Natural killer cell (primary cell): ENCODE measurements at regions of chr2 and their contacts with region 1.

Region 1: GRCh38 chr2:180675170-180675569 is 305.2 kb upstream of the UBE2E3 start:
- DNase-seq: no peak
- ATAC-seq: no peak
- H3K4me3 ChIP-seq: no peak overlapping the region
- H3K4me3 Mint-ChIP-seq: no peak overlapping the region
- H3K27ac ChIP-seq: no peak overlapping the region
- H3K27ac Mint-ChIP-seq: no peak overlapping the region
- H3K4me1 ChIP-seq: no peaks in the 10 kb centered on the region
- H3K4me1 Mint-ChIP-seq: no peaks in the 10 kb centered on the region
- H3K27me3 ChIP-seq: no peaks in the 10 kb centered on the region
- H3K27me3 Mint-ChIP-seq: peaks cover 4 to 7% of the 10 kb centered on the region in 2 donors
- CTCF ChIP-seq: no peak

Region 2: GRCh38 chr2:180319586-180320405 is 355.4 kb before region 1 on chr2:
- intact Hi-C with region 1: no loop called
- DNase-seq: no peak
- ATAC-seq: no peak
- H3K4me3 ChIP-seq: no peak overlapping the region
- H3K4me3 Mint-ChIP-seq: no peak overlapping the region
- H3K27ac ChIP-seq: no peak overlapping the region
- H3K27ac Mint-ChIP-seq: no peak overlapping the region
- H3K4me1 ChIP-seq: no peaks in the 10 kb centered on the region
- H3K4me1 Mint-ChIP-seq: no peaks in the 10 kb centered on the region
- H3K27me3 ChIP-seq: no peaks in the 10 kb centered on the region
- H3K27me3 Mint-ChIP-seq: no peaks in the 10 kb centered on the region
- CTCF ChIP-seq: no peak

Region 3: DNA sequence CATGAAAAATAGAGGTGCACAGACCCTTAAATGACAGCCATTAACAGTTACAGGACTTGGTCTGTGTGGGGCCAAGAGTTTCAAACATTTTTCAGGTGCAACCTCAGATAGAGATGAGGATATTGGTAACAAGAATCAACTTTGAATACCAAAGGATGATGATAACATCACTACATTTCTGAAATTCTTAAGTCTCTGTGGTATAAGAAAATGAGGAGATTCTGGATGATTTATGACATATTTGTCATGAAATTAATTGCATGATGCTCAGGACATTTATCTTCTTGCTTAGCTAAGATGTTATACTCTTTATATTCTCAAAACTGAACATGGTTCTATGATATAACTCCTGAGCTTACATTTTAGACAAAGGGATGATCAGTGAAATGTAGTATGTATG is 196.3 kb before region 1 on chr2:
- intact Hi-C with region 1: no loop called
- DNase-seq: no peak
- ATAC-seq: no peak
- H3K4me3 ChIP-seq: no peak overlapping the region
- H3K4me3 Mint-ChIP-seq: no peak overlapping the region
- H3K27ac ChIP-seq: no peak overlapping the region
- H3K27ac Mint-ChIP-seq: no peak overlapping the region
- H3K4me1 ChIP-seq: no peaks in the 10 kb centered on the region
- H3K4me1 Mint-ChIP-seq: no peaks in the 10 kb centered on the region
- H3K27me3 ChIP-seq: no peaks in the 10 kb centered on the region
- H3K27me3 Mint-ChIP-seq: no peaks in the 10 kb centered on the region
- CTCF ChIP-seq: no peak

Region 4: DNA sequence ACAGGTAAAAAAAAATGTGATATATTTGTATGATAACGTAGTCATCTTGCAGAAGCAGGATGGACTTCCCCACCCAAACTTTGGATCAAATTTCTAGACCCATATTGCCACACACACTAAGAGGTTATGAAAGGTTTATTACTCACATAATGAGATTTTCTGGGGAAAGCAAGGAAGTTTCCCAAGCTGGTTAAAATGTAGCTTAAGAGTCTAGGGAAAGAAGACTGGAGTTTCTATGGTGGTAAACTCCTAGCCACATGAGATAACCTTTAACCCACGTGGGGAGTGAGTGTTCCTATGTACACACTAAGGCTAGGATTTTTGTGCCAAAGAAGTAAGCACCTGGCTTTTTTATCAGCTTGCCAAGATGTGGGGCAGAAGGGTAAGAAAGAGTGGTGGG is 30.5 kb before region 1 on chr2:
- intact Hi-C with region 1: loop called (anchors 1 kb)
- DNase-seq: no peak
- ATAC-seq: no peak
- H3K4me3 ChIP-seq: no peak overlapping the region
- H3K4me3 Mint-ChIP-seq: no peak overlapping the region
- H3K27ac ChIP-seq: no peak overlapping the region
- H3K27ac Mint-ChIP-seq: no peak overlapping the region
- H3K4me1 ChIP-seq: no peaks in the 10 kb centered on the region
- H3K4me1 Mint-ChIP-seq: no peaks in the 10 kb centered on the region
- H3K27me3 ChIP-seq: no peaks in the 10 kb centered on the region
- H3K27me3 Mint-ChIP-seq: no peaks in the 10 kb centered on the region
- CTCF ChIP-seq: no peak

Region 5: GRCh38 chr2:180790891-180791290 is 115.7 kb after region 1 on chr2:
- intact Hi-C with region 1: no loop called
- DNase-seq: no peak
- ATAC-seq: no peak
- H3K4me3 ChIP-seq: no peak overlapping the region
- H3K4me3 Mint-ChIP-seq: no peak overlapping the region
- H3K27ac ChIP-seq: no peak overlapping the region
- H3K27ac Mint-ChIP-seq: no peak overlapping the region
- H3K4me1 ChIP-seq: no peaks in the 10 kb centered on the region
- H3K4me1 Mint-ChIP-seq: no peaks in the 10 kb centered on the region
- H3K27me3 ChIP-seq: peaks cover 2% of the 10 kb centered on the region
- H3K27me3 Mint-ChIP-seq: no peaks in the 10 kb centered on the region
- CTCF ChIP-seq: no peak

Region 6: GRCh38 chr2:180846756-180847472 is 171.7 kb after region 1 on chr2:
- intact Hi-C with region 1: no loop called
- DNase-seq: no peak
- ATAC-seq: no peak
- H3K4me3 ChIP-seq: no peak overlapping the region
- H3K4me3 Mint-ChIP-seq: no peak overlapping the region
- H3K27ac ChIP-seq: no peak overlapping the region
- H3K27ac Mint-ChIP-seq: no peak overlapping the region
- H3K4me1 ChIP-seq: no peaks in the 10 kb centered on the region
- H3K4me1 Mint-ChIP-seq: no peaks in the 10 kb centered on the region
- H3K27me3 ChIP-seq: peaks cover 2% of the 10 kb centered on the region
- H3K27me3 Mint-ChIP-seq: no peaks in the 10 kb centered on the region
- CTCF ChIP-seq: no peak